ENCODE measurements at regions of chr3 and their contacts with region 1.

Region 1: DNA sequence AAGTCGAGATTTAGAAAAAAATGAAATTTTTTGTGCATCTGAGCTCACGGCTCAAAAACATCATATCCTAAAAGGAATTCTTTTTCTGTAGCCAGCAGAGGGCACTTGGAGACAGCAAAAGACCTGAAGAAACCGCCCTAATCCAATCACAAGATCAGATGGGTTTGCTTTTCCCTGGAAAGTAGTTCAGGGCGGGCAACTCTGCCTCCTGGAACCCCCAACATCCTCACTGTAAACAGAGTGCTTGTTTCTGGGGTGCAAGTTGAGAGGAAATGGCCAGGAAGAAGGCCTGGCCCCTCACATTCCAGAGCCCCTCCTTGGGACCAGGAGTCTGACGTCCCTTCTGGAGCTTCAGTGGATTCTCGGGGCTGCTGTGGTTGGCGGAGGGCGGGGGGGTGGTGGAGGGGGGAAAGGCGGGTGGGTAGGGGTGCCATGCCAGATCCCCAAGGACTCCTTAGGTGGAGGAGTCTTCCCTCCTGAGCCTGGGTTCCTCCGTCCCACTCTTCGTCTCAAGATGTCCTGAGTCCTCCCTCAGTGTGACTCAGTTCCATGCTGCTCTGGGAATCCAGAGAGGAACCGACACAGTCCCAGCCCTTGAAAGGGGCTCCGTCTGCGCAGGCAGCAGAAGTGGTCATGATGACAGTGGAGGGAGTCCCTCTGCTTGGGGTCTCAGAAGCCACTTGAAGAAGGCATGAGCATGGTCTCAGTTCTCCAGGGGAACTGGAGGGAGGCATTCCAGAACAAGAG is 35.9 kb downstream of the CCK start:
- DNase-seq: peak; percentile 50
- H3K4me3 Mint-ChIP-seq: no peak overlapping the region
- H3K27ac Mint-ChIP-seq: no peak overlapping the region
- H3K4me1 Mint-ChIP-seq: peaks cover 5% of the 10 kb centered on the region
- H3K27me3 Mint-ChIP-seq: peaks cover 13% of the 10 kb centered on the region
- CTCF ChIP-seq: peak; percentile 65

Region 2: GRCh38 chr3:41893977-41894376 is 336.1 kb before region 1 on chr3:
- CTCF ChIA-PET with region 1: interaction called, 4 read pairs
- POLR2A ChIA-PET with region 1: no interaction called
- intact Hi-C with region 1: loop called (anchors 1 kb)
- DNase-seq: peak; percentile 65
- H3K4me3 Mint-ChIP-seq: no peak overlapping the region
- H3K27ac Mint-ChIP-seq: no peak overlapping the region
- H3K4me1 Mint-ChIP-seq: no peaks in the 10 kb centered on the region
- H3K27me3 Mint-ChIP-seq: no peaks in the 10 kb centered on the region
- CTCF ChIP-seq: peak; percentile 40

Region 3: GRCh38 chr3:42214565-42215283 is 15.4 kb before region 1 on chr3:
- CTCF ChIA-PET with region 1: interaction called, 16 read pairs
- POLR2A ChIA-PET with region 1: no interaction called
- intact Hi-C with region 1: no loop called
- DNase-seq: no peak
- H3K4me3 Mint-ChIP-seq: no peak overlapping the region
- H3K27ac Mint-ChIP-seq: no peak overlapping the region
- H3K4me1 Mint-ChIP-seq: peaks cover 26% of the 10 kb centered on the region
- H3K27me3 Mint-ChIP-seq: no peaks in the 10 kb centered on the region
- CTCF ChIP-seq: no peak

Region 4: GRCh38 chr3:42247576-42248027 is 17.5 kb after region 1 on chr3:
- CTCF ChIA-PET with region 1: interaction called, 29 read pairs
- POLR2A ChIA-PET with region 1: no interaction called
- intact Hi-C with region 1: no loop called
- DNase-seq: peak; percentile 74
- H3K4me3 Mint-ChIP-seq: no peak overlapping the region
- H3K27ac Mint-ChIP-seq: no peak overlapping the region
- H3K4me1 Mint-ChIP-seq: peaks cover 10% of the 10 kb centered on the region
- H3K27me3 Mint-ChIP-seq: peaks cover 9% of the 10 kb centered on the region
- CTCF ChIP-seq: peak; percentile 87

Region 5: GRCh38 chr3:42290966-42291714 is 61.0 kb after region 1 on chr3:
- CTCF ChIA-PET with region 1: no interaction called
- POLR2A ChIA-PET with region 1: no interaction called
- intact Hi-C with region 1: no loop called
- DNase-seq: no peak
- H3K4me3 Mint-ChIP-seq: no peak overlapping the region
- H3K27ac Mint-ChIP-seq: no peak overlapping the region
- H3K4me1 Mint-ChIP-seq: no peaks in the 10 kb centered on the region
- H3K27me3 Mint-ChIP-seq: peaks cover 18% of the 10 kb centered on the region
- CTCF ChIP-seq: no peak

Region 6: GRCh38 chr3:42443819-42444436 is 213.8 kb after region 1 on chr3:
- CTCF ChIA-PET with region 1: interaction called, 30 read pairs
- POLR2A ChIA-PET with region 1: interaction called, 3 read pairs
- intact Hi-C with region 1: loop called (anchors 1 kb)
- DNase-seq: peak; percentile 83
- H3K4me3 Mint-ChIP-seq: no peak overlapping the region
- H3K27ac Mint-ChIP-seq: no peak overlapping the region
- H3K4me1 Mint-ChIP-seq: no peaks in the 10 kb centered on the region
- H3K27me3 Mint-ChIP-seq: peaks cover 11% of the 10 kb centered on the region
- CTCF ChIP-seq: peak; percentile 97

Region 7: GRCh38 chr3:42539869-42540714 is 310.0 kb after region 1 on chr3:
- CTCF ChIA-PET with region 1: interaction called, 13 read pairs
- POLR2A ChIA-PET with region 1: no interaction called
- intact Hi-C with region 1: loop called (anchors 1 kb)
- DNase-seq: peak; percentile 70
- H3K4me3 Mint-ChIP-seq: no peak overlapping the region
- H3K27ac Mint-ChIP-seq: no peak overlapping the region
- H3K4me1 Mint-ChIP-seq: no peaks in the 10 kb centered on the region
- H3K27me3 Mint-ChIP-seq: no peaks in the 10 kb centered on the region
- CTCF ChIP-seq: peak; percentile 87

Measured in MCF 10A (cell line).